Sigmoid colon (tissue), 7 donors: ENCODE measurements at regions of chr4 and their contacts with region 1.

Region 1: GRCh38 chr4:185534866-185535611 is at the start of gene PDLIM3:
- DNase-seq: peak; percentile 89
- H3K4me3 ChIP-seq: peak within 1 kb of the TSS; percentile 67 to 91 (median 82)
- H3K27ac ChIP-seq: peak within 1 kb of the TSS; percentile 95 to 99 (median 97)
- H3K4me1 ChIP-seq: peaks cover 0 to 45% (median 23%) of the 10 kb centered on the region in 4 donors
- H3K27me3 ChIP-seq: peaks cover 0 to 10% (median 0%) of the 10 kb centered on the region in 3 donors
- CTCF ChIP-seq: no peak
- EP300 ChIP-seq: peak in 1 of 4 donors; percentile 43
- POLR2A ChIP-seq: peak; percentile 90 to 93
- total RNA-seq, gene PDLIM3: 568 to 907 (median 820) TPM

Region 2: GRCh38 chr4:185566972-185567371 is 31.9 kb after region 1 on chr4:
- intact Hi-C with region 1: loop called (anchors 2 kb)
- DNase-seq: peak; percentile 68
- H3K4me3 ChIP-seq: peak overlapping the region in 1 of 4 donors; percentile 0
- H3K27ac ChIP-seq: peak overlapping the region; percentile 83 to 91 (median 88)
- H3K4me1 ChIP-seq: peaks cover 0 to 57% (median 53%) of the 10 kb centered on the region in 4 donors
- H3K27me3 ChIP-seq: no peaks in the 10 kb centered on the region
- CTCF ChIP-seq: no peak
- EP300 ChIP-seq: peak in 1 of 4 donors; percentile 11
- POLR2A ChIP-seq: no peak

Region 3: DNA sequence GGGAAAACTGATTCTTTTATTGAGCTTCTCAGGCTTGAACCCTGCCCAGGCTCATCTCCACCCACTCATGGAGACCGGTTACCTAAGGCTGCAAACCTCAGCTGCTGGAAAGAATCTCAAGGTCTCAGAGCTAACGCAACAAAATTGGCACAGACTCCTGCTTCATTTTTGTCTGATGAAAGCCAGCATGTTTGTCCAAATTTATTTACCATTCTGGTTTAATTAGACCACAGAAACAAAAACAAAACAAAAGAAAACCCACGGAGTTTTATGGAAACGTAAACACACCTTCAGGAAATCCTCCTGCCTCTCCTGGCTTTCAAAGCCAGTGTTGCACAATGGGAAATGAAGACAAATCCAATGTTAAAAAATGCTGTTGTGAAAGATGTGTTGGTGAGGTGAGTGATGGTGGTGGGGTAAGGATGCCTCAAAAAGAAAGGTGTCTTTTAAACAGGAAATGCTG is 56.7 kb after region 1 on chr4:
- intact Hi-C with region 1: loop called (anchors 2 kb)
- DNase-seq: no peak
- H3K4me3 ChIP-seq: no peak overlapping the region
- H3K27ac ChIP-seq: peak overlapping the region; percentile 60 to 72 (median 68)
- H3K4me1 ChIP-seq: peaks cover 0 to 20% (median 17%) of the 10 kb centered on the region in 4 donors
- H3K27me3 ChIP-seq: no peaks in the 10 kb centered on the region
- CTCF ChIP-seq: no peak
- EP300 ChIP-seq: no peak
- POLR2A ChIP-seq: no peak

Region 4: GRCh38 chr4:185933078-185933581 is 398.1 kb after region 1 on chr4:
- intact Hi-C with region 1: no loop called
- DNase-seq: no peak
- H3K4me3 ChIP-seq: no peak overlapping the region
- H3K27ac ChIP-seq: no peak overlapping the region
- H3K4me1 ChIP-seq: peaks cover 0 to 9% (median 0%) of the 10 kb centered on the region in 4 donors
- H3K27me3 ChIP-seq: no peaks in the 10 kb centered on the region
- CTCF ChIP-seq: no peak
- EP300 ChIP-seq: no peak
- POLR2A ChIP-seq: no peak